MCF 10A (cell line): ENCODE measurements at regions of chr1 and their contacts with region 1.

Region 1: DNA sequence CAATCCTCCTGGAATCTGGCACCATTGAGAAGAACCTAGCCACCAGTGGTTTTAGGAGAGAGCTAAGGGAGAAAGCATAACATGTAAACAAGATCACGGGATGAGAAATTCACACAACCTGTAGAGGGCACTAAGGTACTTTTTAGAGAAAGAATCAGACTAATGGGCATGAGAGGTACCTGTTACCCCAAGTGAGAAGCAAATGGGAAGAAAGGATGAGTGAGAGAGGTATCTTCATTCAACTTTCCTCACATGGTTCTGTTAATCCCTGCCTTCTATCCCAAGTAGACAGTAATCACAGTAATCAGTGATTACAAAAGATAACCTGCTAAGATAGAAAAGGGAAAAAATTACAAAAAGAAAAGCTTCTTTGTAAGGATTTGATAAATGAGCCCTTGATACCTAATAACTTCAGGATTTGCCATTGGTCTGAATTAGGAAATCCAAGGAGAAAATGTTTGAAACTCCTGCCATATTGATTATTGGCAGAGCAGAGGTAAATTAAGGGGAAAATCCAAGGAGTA is 251.1 kb upstream of the ADGRL2 start:
- DNase-seq: peak; percentile 61
- H3K4me3 Mint-ChIP-seq: no peak overlapping the region
- H3K27ac Mint-ChIP-seq: no peak overlapping the region
- H3K4me1 Mint-ChIP-seq: no peaks in the 10 kb centered on the region
- H3K27me3 Mint-ChIP-seq: no peaks in the 10 kb centered on the region
- CTCF ChIP-seq: peak; percentile 60

Region 2: GRCh38 chr1:81477710-81478109 is 72.0 kb before region 1 on chr1:
- CTCF ChIA-PET with region 1: no interaction called
- POLR2A ChIA-PET with region 1: no interaction called
- intact Hi-C with region 1: no loop called
- DNase-seq: no peak
- H3K4me3 Mint-ChIP-seq: no peak overlapping the region
- H3K27ac Mint-ChIP-seq: no peak overlapping the region
- H3K4me1 Mint-ChIP-seq: peaks cover 5% of the 10 kb centered on the region
- H3K27me3 Mint-ChIP-seq: no peaks in the 10 kb centered on the region
- CTCF ChIP-seq: no peak

Region 3: GRCh38 chr1:81559662-81560350 is 10.1 kb after region 1 on chr1:
- CTCF ChIA-PET with region 1: interaction called, 25 read pairs
- POLR2A ChIA-PET with region 1: interaction called, 4 read pairs
- intact Hi-C with region 1: no loop called
- DNase-seq: peak; percentile 27
- H3K4me3 Mint-ChIP-seq: no peak overlapping the region
- H3K27ac Mint-ChIP-seq: no peak overlapping the region
- H3K4me1 Mint-ChIP-seq: no peaks in the 10 kb centered on the region
- H3K27me3 Mint-ChIP-seq: no peaks in the 10 kb centered on the region
- CTCF ChIP-seq: peak; percentile 7

Region 4: GRCh38 chr1:81731989-81732388 is 182.3 kb after region 1 on chr1:
- CTCF ChIA-PET with region 1: interaction called, 12 read pairs
- POLR2A ChIA-PET with region 1: no interaction called
- intact Hi-C with region 1: no loop called
- DNase-seq: peak; percentile 39
- H3K4me3 Mint-ChIP-seq: no peak overlapping the region
- H3K27ac Mint-ChIP-seq: no peak overlapping the region
- H3K4me1 Mint-ChIP-seq: no peaks in the 10 kb centered on the region
- H3K27me3 Mint-ChIP-seq: no peaks in the 10 kb centered on the region
- CTCF ChIP-seq: peak; percentile 15

Region 5: DNA sequence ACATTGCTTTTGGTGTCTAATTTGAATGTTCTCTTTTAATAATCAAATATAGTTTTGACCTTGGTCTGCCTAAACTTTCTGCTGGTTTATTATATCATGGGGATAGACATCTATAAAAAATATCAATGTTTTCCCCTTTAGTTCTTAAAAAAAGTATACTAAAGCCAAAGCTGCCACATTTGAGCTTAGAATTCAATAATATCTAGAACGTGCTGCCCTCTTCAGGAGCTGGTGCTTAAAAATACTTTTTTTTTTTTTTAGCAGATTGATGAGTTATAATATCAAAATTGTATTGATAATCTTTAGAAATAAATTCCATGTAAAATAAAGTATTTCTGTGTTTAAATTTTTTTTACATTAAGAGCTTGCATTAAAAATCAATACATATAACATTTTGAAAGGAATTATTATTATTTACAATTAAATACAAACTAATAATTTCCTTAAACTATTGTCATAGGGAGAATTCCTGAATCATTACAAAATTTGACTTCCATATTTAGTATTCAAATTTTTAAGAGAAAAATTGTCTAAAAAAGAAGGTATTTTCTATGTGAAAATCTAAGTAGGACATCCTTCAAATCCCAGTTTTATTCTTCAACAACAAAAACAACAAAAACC is 210.9 kb after region 1 on chr1:
- CTCF ChIA-PET with region 1: interaction called, 54 read pairs
- POLR2A ChIA-PET with region 1: interaction called, 4 read pairs
- intact Hi-C with region 1: loop called (anchors 1 kb)
- DNase-seq: peak; percentile 29
- H3K4me3 Mint-ChIP-seq: no peak overlapping the region
- H3K27ac Mint-ChIP-seq: no peak overlapping the region
- H3K4me1 Mint-ChIP-seq: no peaks in the 10 kb centered on the region
- H3K27me3 Mint-ChIP-seq: no peaks in the 10 kb centered on the region
- CTCF ChIP-seq: peak; percentile 35

Region 6: GRCh38 chr1:81781749-81782148 is 232.1 kb after region 1 on chr1:
- CTCF ChIA-PET with region 1: interaction called, 10 read pairs
- POLR2A ChIA-PET with region 1: no interaction called
- intact Hi-C with region 1: no loop called
- DNase-seq: no peak
- H3K4me3 Mint-ChIP-seq: no peak overlapping the region
- H3K27ac Mint-ChIP-seq: no peak overlapping the region
- H3K4me1 Mint-ChIP-seq: no peaks in the 10 kb centered on the region
- H3K27me3 Mint-ChIP-seq: no peaks in the 10 kb centered on the region
- CTCF ChIP-seq: no peak

Region 7: DNA sequence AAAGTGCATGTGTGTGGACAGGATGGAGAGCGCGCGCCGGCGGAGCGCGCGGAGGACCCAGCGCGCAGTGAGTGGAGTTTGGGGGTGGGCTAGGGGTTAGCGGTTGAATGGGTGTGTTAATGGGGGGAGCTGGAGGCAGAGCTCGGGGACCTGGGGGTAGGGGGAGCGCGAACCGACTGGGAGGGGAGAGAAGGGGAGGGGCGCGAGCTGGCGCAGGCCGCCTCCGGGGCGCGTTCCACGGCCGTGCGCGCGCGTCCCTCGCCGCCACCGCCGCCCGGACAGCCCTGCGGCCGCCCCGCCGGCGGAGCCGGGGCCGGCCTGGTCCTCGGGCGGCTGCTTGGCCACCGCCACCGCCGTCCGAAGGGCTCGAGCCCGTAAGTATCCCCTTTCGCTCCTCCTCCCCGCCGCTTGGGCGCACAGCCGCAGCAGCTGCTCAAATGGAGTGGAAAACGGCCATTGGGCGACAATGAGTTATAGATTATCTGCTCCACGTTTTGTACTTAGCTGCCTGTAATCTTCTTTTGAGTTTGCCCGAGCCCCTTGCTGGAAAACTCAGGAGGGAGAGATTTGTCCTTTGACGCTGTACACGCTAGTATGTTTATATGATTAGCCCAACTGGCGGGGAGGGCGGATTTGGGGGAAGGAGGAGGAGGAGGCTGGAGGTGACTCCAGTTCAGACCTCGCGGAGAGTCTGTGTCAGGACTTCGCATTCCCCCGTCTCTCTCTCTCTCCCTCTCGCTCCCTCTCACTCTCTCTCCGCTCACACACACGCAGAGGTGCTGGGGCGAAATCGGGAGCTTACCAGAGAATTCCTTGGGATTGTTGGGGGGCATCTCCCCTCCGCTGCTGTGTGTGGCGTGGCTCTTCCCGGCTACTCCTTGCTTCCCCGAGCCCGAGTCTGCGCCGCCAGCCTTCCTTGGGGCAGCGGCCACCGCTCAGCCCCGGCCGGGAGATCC is 251.3 kb after region 1 on chr1 and contains the start of gene ADGRL2:
- CTCF ChIA-PET with region 1: interaction called, 7 read pairs
- POLR2A ChIA-PET with region 1: interaction called, 14 read pairs
- intact Hi-C with region 1: loop called (anchors 2 kb)
- DNase-seq: peak; percentile 93
- H3K4me3 Mint-ChIP-seq: peak within 1 kb of the TSS; percentile 98
- H3K27ac Mint-ChIP-seq: peak within 1 kb of the TSS; percentile 69
- H3K4me1 Mint-ChIP-seq: peaks cover 7% of the 10 kb centered on the region
- H3K27me3 Mint-ChIP-seq: peaks cover 33% of the 10 kb centered on the region
- CTCF ChIP-seq: no peak
- total RNA-seq, gene ADGRL2: 3.0 and 3.4 TPM in 2 replicates